ENCODE measurements at regions of chr1 and their contacts with region 1.

Region 1: DNA sequence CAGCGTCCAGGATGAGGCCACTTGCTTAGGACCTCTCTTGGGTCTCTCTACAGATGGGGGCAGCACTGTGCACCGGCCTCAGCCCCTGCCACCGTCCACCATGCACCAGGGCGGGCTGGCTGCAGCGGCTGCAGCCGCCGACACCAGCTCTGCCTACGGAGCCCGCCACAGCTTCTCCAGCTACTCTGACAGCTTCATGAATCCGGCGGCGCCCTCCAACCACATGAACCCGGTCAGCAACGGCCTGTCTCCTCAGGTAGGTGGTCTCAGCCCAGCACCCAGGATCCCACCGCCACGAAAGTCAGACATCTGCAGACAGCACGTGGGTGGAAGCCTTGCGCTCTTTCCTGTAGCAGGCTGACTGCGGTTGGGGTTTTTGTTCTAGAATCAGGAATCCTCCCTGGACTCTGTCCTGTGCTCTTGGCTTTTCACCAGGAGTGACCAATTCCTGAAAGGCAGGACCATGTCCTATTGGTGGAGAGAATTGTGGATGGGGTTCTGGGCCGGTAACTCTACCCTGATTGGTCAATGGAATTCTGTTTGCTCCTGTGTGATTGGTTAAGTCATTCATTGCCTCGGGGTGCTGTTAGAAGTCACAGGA is 72.5 kb downstream of the PAX7 start:
- DNase-seq: no peak
- CTCF ChIP-seq: no peak

Region 2: GRCh38 chr1:18618546-18619466 is 84.3 kb before region 1 on chr1:
- in situ Hi-C with region 1: loop called (anchors 25 kb)
- DNase-seq: no peak
- CTCF ChIP-seq: no peak

Measured in GM13977 (cell line).